GM12878 (cell line): ENCODE measurements at regions of chr1 and their contacts with region 1.

Region 1: DNA sequence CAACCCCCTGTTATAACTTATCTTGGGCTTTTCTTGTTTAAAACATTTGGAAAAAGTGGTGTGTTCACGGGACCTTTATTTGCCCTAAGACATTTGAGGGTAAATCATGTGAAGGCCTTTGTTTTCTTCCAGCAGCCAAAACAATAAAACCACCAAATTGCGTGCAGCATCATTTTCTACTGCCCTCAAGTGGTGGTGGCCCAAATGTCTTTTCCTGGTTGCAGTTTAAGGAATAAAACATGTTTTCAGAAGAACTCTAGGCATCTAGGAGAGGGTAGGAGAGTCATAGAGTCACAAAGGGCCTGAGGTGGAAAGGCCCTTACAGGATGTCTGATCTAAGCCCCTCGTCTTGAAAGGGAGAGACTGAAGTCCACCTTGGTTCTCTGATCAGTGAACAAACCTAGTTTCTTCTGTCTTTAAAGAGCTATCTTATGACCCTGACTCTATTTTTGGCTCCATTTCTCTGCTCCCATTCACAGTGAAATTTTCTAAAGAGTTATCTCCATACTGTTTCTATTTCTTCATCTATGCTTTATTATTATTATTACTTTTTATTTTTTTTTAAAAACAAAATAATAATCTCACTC is 16.0 kb upstream of the EPS15 start:
- DNase-seq: peak; percentile 54
- ATAC-seq: peak; percentile 72
- H3K4me3 ChIP-seq: no peak overlapping the region
- H3K27ac ChIP-seq: peak overlapping the region; percentile 27; the same call in 1 of the 2 replicates
- H3K4me1 ChIP-seq: peaks cover 11% of the 10 kb centered on the region
- H3K27me3 ChIP-seq: no peaks in the 10 kb centered on the region
- CTCF ChIP-seq: peak; percentile 70 to 85 (median 81)
- EP300 ChIP-seq: no peak
- POLR2A ChIP-seq: no peak
- RAD21 ChIP-seq: peak; percentile 93

Region 2: DNA sequence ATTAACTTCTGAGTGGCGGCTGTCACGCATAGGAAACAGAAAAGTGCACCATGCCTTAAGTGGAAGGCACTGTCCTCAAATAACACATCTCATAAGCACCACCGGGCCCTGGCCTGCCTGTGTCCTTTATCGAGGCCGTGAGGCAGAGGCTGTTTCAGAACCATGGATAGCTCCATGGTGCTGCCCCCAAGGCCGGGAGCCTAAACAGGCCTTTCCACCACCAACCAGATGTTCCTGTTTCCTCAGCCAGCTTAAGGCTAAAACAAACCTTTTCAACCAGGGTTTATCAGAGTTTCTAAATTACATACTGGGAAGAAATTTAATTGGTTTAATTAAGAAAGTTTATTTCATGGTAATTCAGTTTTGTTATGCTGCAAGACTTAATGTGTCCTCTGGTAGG is 1226.2 kb before region 1 on chr1:
- CTCF ChIA-PET with region 1: no interaction called
- POLR2A ChIA-PET with region 1: no interaction called
- RAD21 ChIA-PET with region 1: no interaction called
- SMC1A ChIA-PET with region 1: no interaction called
- in situ Hi-C with region 1: no loop called
- intact Hi-C with region 1: no loop called
- DNase-seq: no peak
- ATAC-seq: peak; percentile 74
- H3K4me3 ChIP-seq: no peak overlapping the region
- H3K27ac ChIP-seq: no peak overlapping the region
- H3K4me1 ChIP-seq: no peaks in the 10 kb centered on the region
- H3K27me3 ChIP-seq: no peaks in the 10 kb centered on the region
- CTCF ChIP-seq: no peak
- EP300 ChIP-seq: no peak
- POLR2A ChIP-seq: no peak
- RAD21 ChIP-seq: no peak

Region 3: DNA sequence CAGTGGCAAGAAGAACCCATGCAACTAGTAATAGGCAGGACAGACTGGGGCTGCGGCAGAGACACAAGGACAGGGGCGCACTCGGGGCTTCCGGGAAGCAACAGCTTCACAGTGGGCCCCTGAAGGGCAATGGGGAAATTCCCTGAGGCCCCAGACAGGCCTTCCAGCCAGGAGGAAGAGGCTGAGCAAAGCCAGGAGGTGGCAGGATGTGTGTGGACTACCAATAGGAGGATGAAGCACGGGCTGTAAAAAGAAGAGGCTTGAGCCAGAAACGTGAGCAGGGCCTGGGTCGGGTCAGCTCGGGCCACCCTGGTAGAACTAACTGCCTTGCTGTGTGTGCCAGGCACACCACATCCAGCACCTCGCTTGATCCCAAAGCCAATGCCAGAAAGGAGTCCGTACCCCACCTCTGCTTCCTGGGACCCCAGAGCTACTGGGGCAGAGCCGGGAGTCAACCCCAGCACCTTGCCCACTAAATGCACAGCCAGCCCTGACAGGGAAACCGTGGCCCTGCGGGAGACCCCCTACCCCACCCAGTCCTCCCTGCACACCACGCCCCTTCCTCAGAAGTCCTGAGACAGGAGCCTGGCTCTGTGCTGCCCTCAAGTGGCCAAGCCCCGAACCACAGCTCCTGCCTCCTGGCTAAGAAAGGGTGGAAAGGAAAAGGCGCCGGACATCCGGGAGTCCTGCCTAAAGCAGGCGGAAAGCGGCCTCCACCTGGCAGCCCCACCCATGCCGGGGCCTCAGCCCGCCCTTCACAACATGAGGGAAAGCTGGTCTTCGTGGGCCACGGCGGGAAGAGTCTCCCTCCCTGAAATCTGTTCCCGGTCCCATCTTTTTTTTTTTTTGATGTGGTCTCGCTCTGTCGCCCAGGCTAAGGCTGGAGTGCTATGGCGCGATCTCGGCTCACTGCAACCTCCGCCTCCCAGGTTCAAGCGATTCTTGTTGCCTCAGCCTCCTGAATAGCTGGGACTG is 238.4 kb before region 1 on chr1:
- CTCF ChIA-PET with region 1: interaction called, 7 read pairs
- POLR2A ChIA-PET with region 1: no interaction called
- RAD21 ChIA-PET with region 1: interaction called, 5 read pairs
- SMC1A ChIA-PET with region 1: interaction called, 10 read pairs
- in situ Hi-C with region 1: no loop called
- intact Hi-C with region 1: loop called (anchors 5 kb)
- DNase-seq: peak; percentile 51
- ATAC-seq: peak; percentile 81
- H3K4me3 ChIP-seq: peak overlapping the region; percentile 62; the same call in 1 of the 2 replicates
- H3K27ac ChIP-seq: peak overlapping the region; percentile 23; the same call in 1 of the 2 replicates
- H3K4me1 ChIP-seq: peaks cover 32% of the 10 kb centered on the region
- H3K27me3 ChIP-seq: no peaks in the 10 kb centered on the region; a peak in 1 of 4 replicates
- CTCF ChIP-seq: peak; percentile 92 to 99 (median 97)
- EP300 ChIP-seq: 0 out of 4 replicates have a peak, but pooled peaks of 1 of the 2 experiments have one; percentile 16
- POLR2A ChIP-seq: no peak; the same call in 1 of the 2 replicates
- RAD21 ChIP-seq: peak; percentile 97

Region 4: DNA sequence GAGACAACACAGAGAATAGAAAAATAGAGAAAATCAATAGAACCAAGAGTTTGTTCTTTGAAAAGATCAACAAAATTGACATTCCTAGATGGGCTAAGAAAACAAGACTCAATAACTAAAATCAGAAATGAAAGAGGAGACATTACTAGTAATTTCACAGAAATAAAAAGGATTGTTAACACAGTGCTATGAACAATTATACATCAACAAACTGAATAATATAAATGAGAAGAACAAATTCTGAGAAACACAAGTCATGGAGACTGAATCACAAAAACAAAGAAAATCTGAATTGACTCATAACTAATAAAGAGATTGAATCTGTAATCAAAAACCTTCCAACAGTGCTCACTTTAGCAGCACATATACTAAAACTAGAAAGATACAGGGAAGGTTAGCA is 153.1 kb before region 1 on chr1:
- CTCF ChIA-PET with region 1: no interaction called
- POLR2A ChIA-PET with region 1: no interaction called
- RAD21 ChIA-PET with region 1: no interaction called
- SMC1A ChIA-PET with region 1: no interaction called
- in situ Hi-C with region 1: no loop called
- intact Hi-C with region 1: no loop called
- DNase-seq: no peak
- ATAC-seq: no peak
- H3K4me3 ChIP-seq: no peak overlapping the region
- H3K27ac ChIP-seq: no peak overlapping the region
- H3K4me1 ChIP-seq: no peaks in the 10 kb centered on the region
- H3K27me3 ChIP-seq: no peaks in the 10 kb centered on the region
- CTCF ChIP-seq: no peak
- EP300 ChIP-seq: no peak
- POLR2A ChIP-seq: no peak
- RAD21 ChIP-seq: no peak

Region 5: GRCh38 chr1:51445351-51446090 is 89.6 kb before region 1 on chr1:
- CTCF ChIA-PET with region 1: interaction called, 9 read pairs
- POLR2A ChIA-PET with region 1: no interaction called
- RAD21 ChIA-PET with region 1: interaction called, 21 read pairs
- SMC1A ChIA-PET with region 1: interaction called, 19 read pairs
- in situ Hi-C with region 1: no loop called
- intact Hi-C with region 1: loop called (anchors 5 kb)
- DNase-seq: no peak
- ATAC-seq: no peak; the same call in 2 of the 3 replicates
- H3K4me3 ChIP-seq: no peak overlapping the region
- H3K27ac ChIP-seq: peak overlapping the region; percentile 47
- H3K4me1 ChIP-seq: peaks cover 36% of the 10 kb centered on the region
- H3K27me3 ChIP-seq: no peaks in the 10 kb centered on the region
- CTCF ChIP-seq: no peak
- EP300 ChIP-seq: no peak
- POLR2A ChIP-seq: no peak
- RAD21 ChIP-seq: no peak

Region 6: GRCh38 chr1:51491166-51491981 is 43.7 kb before region 1 on chr1:
- CTCF ChIA-PET with region 1: interaction called, 14 read pairs
- POLR2A ChIA-PET with region 1: no interaction called
- RAD21 ChIA-PET with region 1: interaction called, 12 read pairs
- SMC1A ChIA-PET with region 1: interaction called, 4 read pairs
- in situ Hi-C with region 1: no loop called
- intact Hi-C with region 1: no loop called
- DNase-seq: no peak
- ATAC-seq: peak; percentile 75
- H3K4me3 ChIP-seq: peak overlapping the region; percentile 69; the same call in 1 of the 2 replicates
- H3K27ac ChIP-seq: peak overlapping the region; percentile 72
- H3K4me1 ChIP-seq: peaks cover 45% of the 10 kb centered on the region
- H3K27me3 ChIP-seq: no peaks in the 10 kb centered on the region
- CTCF ChIP-seq: no peak
- EP300 ChIP-seq: 0 out of 4 replicates have a peak, but pooled peaks of 1 of the 2 experiments have one; percentile 3
- POLR2A ChIP-seq: no peak
- RAD21 ChIP-seq: no peak

Region 7: GRCh38 chr1:51549016-51549619 is 14.0 kb after region 1 on chr1:
- CTCF ChIA-PET with region 1: interaction called, 18 read pairs
- POLR2A ChIA-PET with region 1: no interaction called
- RAD21 ChIA-PET with region 1: interaction called, 3 read pairs
- SMC1A ChIA-PET with region 1: interaction called, 7 read pairs
- in situ Hi-C with region 1: no loop called
- intact Hi-C with region 1: no loop called
- DNase-seq: no peak
- ATAC-seq: peak; percentile 48; the same call in 1 of the 3 replicates
- H3K4me3 ChIP-seq: no peak overlapping the region
- H3K27ac ChIP-seq: no peak overlapping the region
- H3K4me1 ChIP-seq: peaks cover 12% of the 10 kb centered on the region; the same call in 1 of the 2 replicates
- H3K27me3 ChIP-seq: no peaks in the 10 kb centered on the region
- CTCF ChIP-seq: no peak
- EP300 ChIP-seq: no peak
- POLR2A ChIP-seq: no peak
- RAD21 ChIP-seq: no peak